Aorta (tissue), 5 donors: ENCODE measurements at regions of chr3 and their contacts with region 1.

Region 1: GRCh38 chr3:195612075-195612800 is 28.5 kb upstream of the APOD start:
- DNase-seq: no peak
- ATAC-seq: no peak
- H3K4me3 ChIP-seq: no peak overlapping the region
- H3K27ac ChIP-seq: no peak overlapping the region
- H3K4me1 ChIP-seq: no peaks in the 10 kb centered on the region
- H3K27me3 ChIP-seq: no peaks in the 10 kb centered on the region

Region 2: DNA sequence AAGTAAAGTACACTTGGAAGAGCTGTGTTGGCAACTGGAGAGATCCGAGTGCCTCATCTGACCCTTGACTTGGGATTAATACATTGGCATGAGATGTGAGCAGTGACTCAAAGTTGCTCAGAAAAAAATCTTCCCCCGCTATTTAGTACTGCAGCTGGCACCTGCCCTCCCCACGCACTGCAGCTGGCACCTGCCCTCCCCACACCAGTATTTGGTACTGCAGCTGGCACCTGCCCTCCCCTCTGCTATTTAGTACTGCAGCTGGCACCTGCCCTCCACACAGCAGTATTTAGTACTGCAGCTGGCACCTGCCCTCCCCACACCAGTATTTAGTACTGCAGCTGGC is 104.6 kb after region 1 on chr3:
- intact Hi-C with region 1: loop called (anchors 5 to 10 kb)
- DNase-seq: peak in 1 of 2 donors; percentile 41
- ATAC-seq: peak; percentile 26
- H3K4me3 ChIP-seq: no peak overlapping the region
- H3K27ac ChIP-seq: no peak overlapping the region
- H3K4me1 ChIP-seq: no peaks in the 10 kb centered on the region
- H3K27me3 ChIP-seq: no peaks in the 10 kb centered on the region

Region 3: GRCh38 chr3:195727606-195728195 is 115.5 kb after region 1 on chr3:
- intact Hi-C with region 1: loop called (anchors 5 to 10 kb)
- DNase-seq: peak; percentile 33 to 59
- ATAC-seq: no peak
- H3K4me3 ChIP-seq: no peak overlapping the region
- H3K27ac ChIP-seq: no peak overlapping the region
- H3K4me1 ChIP-seq: no peaks in the 10 kb centered on the region
- H3K27me3 ChIP-seq: no peaks in the 10 kb centered on the region

Region 4: DNA sequence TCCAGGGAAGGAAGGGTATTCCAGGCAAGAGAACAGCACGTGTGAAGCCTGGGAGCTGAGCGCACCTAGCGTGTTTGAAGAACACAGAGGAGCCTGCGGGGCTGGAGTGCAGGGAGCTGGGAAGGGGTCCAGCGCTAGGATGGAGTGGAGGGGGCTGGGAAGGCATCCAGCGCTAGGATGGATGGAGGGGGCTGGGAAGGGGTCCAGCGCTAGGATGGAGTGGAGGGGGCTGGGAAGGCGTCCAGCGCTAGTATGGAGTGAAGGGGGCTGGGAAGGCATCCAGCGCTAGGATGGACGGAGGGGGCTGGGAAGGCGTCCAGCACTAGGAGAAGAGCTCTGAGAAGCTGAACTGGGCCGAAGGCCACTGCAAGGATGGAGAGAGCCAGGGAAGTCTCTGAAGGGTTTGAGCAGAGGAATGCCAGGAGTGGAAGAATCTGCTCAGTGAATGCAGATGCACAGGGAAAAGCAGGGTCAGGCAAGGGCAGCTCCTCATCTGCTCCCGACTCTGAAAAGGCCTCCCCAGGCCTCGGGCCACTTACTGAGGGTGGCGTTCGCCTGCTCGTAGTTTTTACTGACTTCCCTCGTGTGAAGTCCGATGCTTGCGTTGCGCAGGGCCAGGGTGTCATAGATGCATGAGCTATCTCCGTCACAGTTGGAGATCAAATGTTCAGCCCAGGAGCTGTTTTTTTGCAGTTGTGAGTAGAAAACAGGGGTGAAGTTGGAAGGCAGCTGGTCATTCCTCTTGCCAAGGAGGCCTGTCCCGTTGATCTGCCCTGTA is 148.3 kb after region 1 on chr3:
- intact Hi-C with region 1: no loop called
- DNase-seq: peak in 1 of 2 donors; percentile 61
- ATAC-seq: peak; percentile 87
- H3K4me3 ChIP-seq: no peak overlapping the region
- H3K27ac ChIP-seq: no peak overlapping the region
- H3K4me1 ChIP-seq: no peaks in the 10 kb centered on the region
- H3K27me3 ChIP-seq: peaks cover 0 to 2% of the 10 kb centered on the region in 2 donors

Region 5: GRCh38 chr3:195894780-195895607 is 282.8 kb after region 1 on chr3:
- intact Hi-C with region 1: no loop called
- DNase-seq: peak; percentile 70 to 88
- ATAC-seq: peak; percentile 39
- H3K4me3 ChIP-seq: peak overlapping the region; percentile 46 to 66
- H3K27ac ChIP-seq: peak overlapping the region; percentile 56 to 76
- H3K4me1 ChIP-seq: no peaks in the 10 kb centered on the region
- H3K27me3 ChIP-seq: no peaks in the 10 kb centered on the region